ENCODE measurements at regions of chr16 and their contacts with region 1.

Region 1: DNA sequence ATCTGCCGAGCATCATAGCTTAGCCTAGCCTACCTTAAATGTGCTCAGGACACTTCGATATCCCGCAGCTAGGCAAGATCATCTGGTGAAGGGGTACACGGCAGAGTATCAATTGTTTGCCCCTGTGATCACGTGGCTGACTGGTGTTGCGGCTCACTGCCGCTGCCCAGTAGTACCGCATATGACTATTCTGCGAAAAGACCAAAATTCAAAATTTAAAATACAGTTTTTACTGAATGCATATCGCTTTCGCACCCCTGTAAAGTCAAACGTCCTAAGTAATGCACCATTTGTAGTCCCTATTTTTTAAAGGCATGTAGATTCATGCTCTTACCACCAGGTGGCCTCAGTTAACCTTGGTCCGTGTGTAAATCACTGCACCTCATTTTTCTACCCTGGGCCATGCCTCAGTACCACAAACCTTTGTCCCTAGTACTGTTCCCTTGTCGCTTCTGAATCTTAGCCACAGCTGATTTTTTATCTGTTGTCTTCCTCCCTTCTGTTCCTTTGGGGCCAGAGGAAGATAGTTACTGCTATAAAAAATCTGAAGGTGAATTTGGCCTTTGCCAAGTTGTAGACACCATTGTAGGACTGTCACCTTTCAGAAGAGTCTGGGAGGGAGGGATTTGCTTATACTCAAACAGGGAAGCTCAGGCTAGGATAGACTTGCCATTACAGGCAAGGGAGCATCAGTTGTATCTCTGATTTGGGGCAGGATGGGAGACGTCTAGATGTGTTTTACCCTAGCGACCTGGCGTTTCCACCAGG is 34.4 kb downstream of the WWP2 start:
- DNase-seq: peak; percentile 66

Region 2: GRCh38 chr16:69930117-69930776 is 133.7 kb after region 1 on chr16:
- CTCF ChIA-PET with region 1: interaction called, 12 read pairs
- POLR2A ChIA-PET with region 1: no interaction called
- DNase-seq: peak; percentile 79